B cell (primary cell): ENCODE measurements at regions of chr4 and their contacts with region 1.

Region 1: DNA sequence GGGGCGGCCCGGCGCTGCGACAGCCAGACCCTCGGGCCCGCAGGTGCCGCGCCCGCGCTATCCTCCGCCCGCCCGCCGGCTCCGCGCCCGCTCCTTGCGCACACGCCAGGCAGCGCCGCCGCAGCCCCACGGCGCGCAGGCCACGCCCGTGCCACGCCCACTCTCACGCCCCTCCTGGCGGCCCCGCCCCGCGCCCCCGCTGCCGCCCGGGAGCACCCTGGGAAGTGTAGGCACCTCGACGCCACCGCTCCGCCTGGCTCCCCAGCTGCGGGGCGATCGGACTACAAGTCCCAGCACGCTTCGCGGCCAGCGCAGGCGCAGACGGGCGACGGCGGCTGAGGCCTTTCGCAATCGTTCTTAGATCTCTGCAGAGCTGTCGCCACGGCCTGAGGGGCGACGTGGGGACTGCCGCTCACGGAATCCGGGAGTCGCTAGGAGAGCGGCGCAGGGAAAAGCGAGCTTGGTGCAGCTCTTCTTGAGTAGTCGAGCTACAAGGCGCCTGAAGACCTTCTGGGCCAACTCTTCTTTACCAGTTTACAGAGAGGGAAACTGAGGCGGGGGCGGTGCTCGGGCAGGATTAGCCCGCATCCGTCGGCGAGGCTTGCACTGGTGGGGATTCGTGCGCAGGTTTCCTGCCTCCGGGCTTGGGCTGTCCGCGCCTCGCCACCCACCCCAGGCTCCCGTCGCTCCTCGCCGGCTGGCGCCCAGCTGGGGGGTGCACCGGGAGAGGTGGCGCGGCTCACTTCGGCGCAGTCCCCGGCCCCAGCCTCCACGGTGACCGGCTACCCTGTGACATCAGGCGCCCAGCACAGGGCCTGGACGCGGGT is at the start of gene ABLIM2:
- DNase-seq: peak; percentile 98
- ATAC-seq: peak; percentile 91
- H3K4me3 ChIP-seq: peak within 1 kb of the TSS; percentile 77 to 99 (median 95)
- H3K4me3 Mint-ChIP-seq: peak within 1 kb of the TSS; percentile 94
- H3K27ac ChIP-seq: peak within 1 kb of the TSS; percentile 35 to 41
- H3K27ac Mint-ChIP-seq: peak within 1 kb of the TSS; percentile 87
- H3K4me1 ChIP-seq: peaks cover 44 to 59% of the 10 kb centered on the region in 2 donors
- H3K4me1 Mint-ChIP-seq: peaks cover 44% of the 10 kb centered on the region
- H3K27me3 ChIP-seq: peaks cover 0 to 19% (median 10%) of the 10 kb centered on the region in 4 experiments
- H3K27me3 Mint-ChIP-seq: peaks cover 12% of the 10 kb centered on the region
- CTCF ChIP-seq: no peak
- total RNA-seq, gene ABLIM2: 68.3 and 79.0 TPM in 2 replicates

Region 2: GRCh38 chr4:8079031-8079885 is 79.7 kb before region 1 on chr4:
- CTCF ChIA-PET with region 1: no interaction called
- POLR2A ChIA-PET with region 1: no interaction called
- intact Hi-C with region 1: no loop called
- DNase-seq: no peak
- ATAC-seq: no peak
- H3K4me3 ChIP-seq: no peak overlapping the region
- H3K4me3 Mint-ChIP-seq: no peak overlapping the region
- H3K27ac ChIP-seq: no peak overlapping the region
- H3K27ac Mint-ChIP-seq: peak overlapping the region; percentile 20
- H3K4me1 ChIP-seq: no peaks in the 10 kb centered on the region
- H3K4me1 Mint-ChIP-seq: no peaks in the 10 kb centered on the region
- H3K27me3 ChIP-seq: no peaks in the 10 kb centered on the region
- H3K27me3 Mint-ChIP-seq: peaks cover 10% of the 10 kb centered on the region
- CTCF ChIP-seq: no peak

Region 3: GRCh38 chr4:8228319-8229250 is 69.7 kb after region 1 on chr4:
- CTCF ChIA-PET with region 1: no interaction called
- POLR2A ChIA-PET with region 1: interaction called, 3 read pairs
- intact Hi-C with region 1: loop called (anchors 2 kb)
- DNase-seq: peak; percentile 75
- ATAC-seq: peak; percentile 73
- H3K4me3 ChIP-seq: peak overlapping the region in 1 of 5 experiments; percentile 14
- H3K4me3 Mint-ChIP-seq: peak overlapping the region; percentile 74
- H3K27ac ChIP-seq: peak overlapping the region; percentile 68 to 73
- H3K27ac Mint-ChIP-seq: peak overlapping the region; percentile 92
- H3K4me1 ChIP-seq: peaks cover 17 to 41% of the 10 kb centered on the region in 2 donors
- H3K4me1 Mint-ChIP-seq: peaks cover 39% of the 10 kb centered on the region
- H3K27me3 ChIP-seq: no peaks in the 10 kb centered on the region
- H3K27me3 Mint-ChIP-seq: no peaks in the 10 kb centered on the region
- CTCF ChIP-seq: no peak

Region 4: GRCh38 chr4:8403173-8403753 is 244.3 kb after region 1 on chr4:
- CTCF ChIA-PET with region 1: no interaction called
- POLR2A ChIA-PET with region 1: no interaction called
- intact Hi-C with region 1: no loop called
- DNase-seq: peak; percentile 56
- ATAC-seq: peak; percentile 53
- H3K4me3 ChIP-seq: no peak overlapping the region
- H3K4me3 Mint-ChIP-seq: no peak overlapping the region
- H3K27ac ChIP-seq: no peak overlapping the region
- H3K27ac Mint-ChIP-seq: no peak overlapping the region
- H3K4me1 ChIP-seq: no peaks in the 10 kb centered on the region
- H3K4me1 Mint-ChIP-seq: peaks cover 2% of the 10 kb centered on the region
- H3K27me3 ChIP-seq: no peaks in the 10 kb centered on the region
- H3K27me3 Mint-ChIP-seq: no peaks in the 10 kb centered on the region
- CTCF ChIP-seq: peak; percentile 89

Region 5: DNA sequence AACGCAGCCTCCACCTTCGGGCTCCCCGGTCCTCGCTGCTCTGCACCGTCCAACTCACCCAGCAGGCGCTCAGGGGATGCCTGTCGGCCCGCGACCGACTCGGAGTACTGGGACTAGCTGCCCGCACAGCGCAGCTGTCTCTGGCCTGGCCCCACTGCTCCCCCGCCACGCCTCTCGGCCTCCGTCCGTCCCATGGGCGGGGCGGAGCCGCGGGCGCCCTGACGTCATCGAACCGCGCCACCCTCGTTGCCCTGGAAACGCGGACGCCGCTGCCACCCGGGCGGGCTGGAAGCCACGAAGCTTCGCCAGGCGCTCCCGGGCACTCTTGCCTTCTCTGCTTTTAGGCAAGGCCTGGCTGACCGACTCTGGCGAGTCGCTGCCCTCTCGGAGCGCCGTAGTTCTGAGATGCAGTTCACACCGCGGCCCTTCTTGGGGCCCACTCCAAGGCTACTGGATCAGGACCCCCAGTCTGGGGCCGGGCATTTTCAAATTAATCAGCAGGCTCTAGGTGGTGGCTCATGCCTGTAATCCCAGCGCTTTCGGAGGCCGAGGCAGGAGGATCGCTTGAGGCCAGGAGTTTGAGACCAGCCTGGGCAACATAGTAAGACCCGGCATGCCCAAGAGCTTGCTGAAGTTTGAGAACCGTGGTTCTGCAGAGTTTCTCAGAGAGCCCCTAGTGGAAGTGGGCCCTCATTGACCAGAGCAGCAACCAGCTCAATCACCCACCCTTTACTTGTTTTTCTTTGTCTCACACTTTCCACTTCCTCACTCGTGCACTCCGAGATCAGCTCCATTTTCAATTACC is 269.6 kb after region 1 on chr4:
- CTCF ChIA-PET with region 1: no interaction called
- POLR2A ChIA-PET with region 1: interaction called, 3 read pairs
- intact Hi-C with region 1: loop called (anchors 1 kb)
- DNase-seq: peak; percentile 93
- ATAC-seq: peak; percentile 95
- H3K4me3 ChIP-seq: peak overlapping the region; percentile 46 to 97 (median 63)
- H3K4me3 Mint-ChIP-seq: peak overlapping the region; percentile 98
- H3K27ac ChIP-seq: peak overlapping the region; percentile 28 to 78
- H3K27ac Mint-ChIP-seq: peak overlapping the region; percentile 97
- H3K4me1 ChIP-seq: peaks cover 15 to 16% of the 10 kb centered on the region in 2 donors
- H3K4me1 Mint-ChIP-seq: peaks cover 25% of the 10 kb centered on the region
- H3K27me3 ChIP-seq: no peaks in the 10 kb centered on the region
- H3K27me3 Mint-ChIP-seq: no peaks in the 10 kb centered on the region
- CTCF ChIP-seq: no peak

Region 6: DNA sequence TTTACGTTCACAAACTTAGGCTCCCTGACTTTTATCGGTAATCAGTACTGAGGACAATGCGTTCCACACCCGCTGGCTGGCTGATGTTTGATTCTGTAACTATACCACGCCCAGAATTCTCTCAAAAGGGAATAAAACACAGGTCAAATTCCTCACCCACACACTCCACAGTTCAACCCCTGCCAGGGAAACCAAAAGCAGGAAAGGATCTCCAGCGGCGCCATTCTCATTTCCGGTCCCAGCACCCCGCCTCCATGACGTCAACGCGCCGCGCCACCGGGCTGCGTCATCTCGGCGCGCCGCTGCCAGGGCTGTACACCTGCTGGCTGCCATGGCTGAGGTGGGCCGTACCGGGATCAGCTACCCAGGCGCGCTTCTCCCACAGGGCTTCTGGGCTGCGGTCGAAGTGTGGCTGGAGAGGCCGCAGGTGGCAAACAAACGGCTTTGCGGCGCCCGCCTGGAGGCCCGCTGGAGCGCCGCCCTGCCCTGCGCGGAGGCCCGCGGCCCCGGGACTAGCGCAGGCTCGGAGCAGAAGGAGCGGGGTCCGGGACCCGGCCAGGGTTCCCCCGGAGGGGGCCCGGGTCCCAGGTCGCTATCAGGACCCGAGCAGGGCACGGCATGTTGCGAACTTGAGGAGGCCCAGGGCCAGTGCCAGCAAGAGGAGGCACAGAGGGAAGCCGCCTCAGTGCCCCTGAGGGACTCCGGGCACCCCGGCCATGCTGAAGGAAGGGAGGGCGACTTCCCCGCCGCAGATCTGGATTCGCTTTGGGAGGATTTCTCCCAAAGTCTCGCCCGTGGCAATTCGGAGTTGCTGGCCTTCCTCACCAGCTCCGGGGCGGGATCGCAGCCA is 281.8 kb after region 1 on chr4 and contains the starts of genes ACOX3 and TRMT44:
- CTCF ChIA-PET with region 1: no interaction called
- POLR2A ChIA-PET with region 1: no interaction called
- intact Hi-C with region 1: loop called (anchors 1 kb)
- DNase-seq: peak; percentile 96
- ATAC-seq: peak; percentile 88
- H3K4me3 ChIP-seq: peak within 1 kb of the TSS; percentile 80 to 100 (median 100)
- H3K4me3 Mint-ChIP-seq: peak within 1 kb of the TSS; percentile 100
- H3K27ac ChIP-seq: peak within 1 kb of the TSS; percentile 96 to 97
- H3K27ac Mint-ChIP-seq: peak within 1 kb of the TSS; percentile 100
- H3K4me1 ChIP-seq: peaks cover 35 to 40% of the 10 kb centered on the region in 2 donors
- H3K4me1 Mint-ChIP-seq: peaks cover 60% of the 10 kb centered on the region
- H3K27me3 ChIP-seq: no peaks in the 10 kb centered on the region
- H3K27me3 Mint-ChIP-seq: no peaks in the 10 kb centered on the region
- CTCF ChIP-seq: no peak
- total RNA-seq, gene ACOX3: 20.7 and 23.1 TPM in 2 replicates
- total RNA-seq, gene TRMT44: 34.8 and 37.4 TPM in 2 replicates